ENCODE measurements at regions of chr16 and their contacts with region 1.

Region 1: GRCh38 chr16:85491058-85491771 is 121.9 kb upstream of the GSE1 start:
- DNase-seq: peak; percentile 65
- H3K4me3 ChIP-seq: no peak overlapping the region
- H3K27ac ChIP-seq: peak overlapping the region in 1 of 4 donors; percentile 23
- H3K4me1 ChIP-seq: peaks cover 13 to 22% (median 15%) of the 10 kb centered on the region in 4 donors
- H3K27me3 ChIP-seq: no peaks in the 10 kb centered on the region
- CTCF ChIP-seq: peak; percentile 64 to 85 (median 80)
- EP300 ChIP-seq: no peak
- POLR2A ChIP-seq: no peak

Region 2: DNA sequence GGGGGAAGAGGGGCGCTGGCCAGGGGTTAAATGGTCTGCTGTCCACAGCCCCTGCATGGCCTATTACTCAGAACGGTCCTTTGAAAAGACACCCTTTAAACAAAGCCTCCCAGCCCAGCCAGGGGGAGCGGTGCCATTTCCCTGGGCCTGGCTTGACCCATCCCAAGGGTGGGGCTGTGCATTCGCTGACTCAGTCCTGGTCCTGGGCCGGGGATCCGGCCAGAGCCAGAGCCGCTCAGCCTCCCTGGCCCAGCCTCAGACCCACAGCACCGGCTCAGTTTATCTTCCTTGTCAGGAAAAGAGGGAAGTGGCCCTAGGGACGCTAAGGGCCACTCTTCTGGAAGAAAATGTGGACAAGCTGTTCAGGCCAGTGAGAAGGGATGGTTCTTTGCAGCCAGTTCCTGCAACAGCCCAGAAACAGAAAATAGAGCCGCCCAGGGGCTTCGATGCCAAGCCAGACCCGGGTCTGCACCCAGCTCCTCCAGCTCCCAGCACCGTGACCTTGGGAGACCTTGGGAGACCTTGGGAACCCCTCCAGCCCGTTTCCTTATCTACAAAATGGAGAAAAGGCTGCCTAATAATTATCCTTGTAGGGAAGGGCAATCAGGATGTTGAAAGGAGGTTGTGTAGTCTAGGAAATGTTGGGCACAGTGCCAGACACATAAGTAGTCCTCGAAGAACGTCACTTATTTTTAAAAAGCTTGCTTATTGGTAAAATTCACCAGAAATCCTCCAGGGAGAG is 562.4 kb before region 1 on chr16:
- in situ Hi-C with region 1: no loop called
- intact Hi-C with region 1: no loop called
- DNase-seq: peak; percentile 58
- H3K4me3 ChIP-seq: no peak overlapping the region
- H3K27ac ChIP-seq: peak overlapping the region; percentile 5 to 57 (median 46)
- H3K4me1 ChIP-seq: peaks cover 0 to 28% (median 10%) of the 10 kb centered on the region in 4 donors
- H3K27me3 ChIP-seq: no peaks in the 10 kb centered on the region
- CTCF ChIP-seq: no peak
- EP300 ChIP-seq: no peak
- POLR2A ChIP-seq: no peak

Region 3: DNA sequence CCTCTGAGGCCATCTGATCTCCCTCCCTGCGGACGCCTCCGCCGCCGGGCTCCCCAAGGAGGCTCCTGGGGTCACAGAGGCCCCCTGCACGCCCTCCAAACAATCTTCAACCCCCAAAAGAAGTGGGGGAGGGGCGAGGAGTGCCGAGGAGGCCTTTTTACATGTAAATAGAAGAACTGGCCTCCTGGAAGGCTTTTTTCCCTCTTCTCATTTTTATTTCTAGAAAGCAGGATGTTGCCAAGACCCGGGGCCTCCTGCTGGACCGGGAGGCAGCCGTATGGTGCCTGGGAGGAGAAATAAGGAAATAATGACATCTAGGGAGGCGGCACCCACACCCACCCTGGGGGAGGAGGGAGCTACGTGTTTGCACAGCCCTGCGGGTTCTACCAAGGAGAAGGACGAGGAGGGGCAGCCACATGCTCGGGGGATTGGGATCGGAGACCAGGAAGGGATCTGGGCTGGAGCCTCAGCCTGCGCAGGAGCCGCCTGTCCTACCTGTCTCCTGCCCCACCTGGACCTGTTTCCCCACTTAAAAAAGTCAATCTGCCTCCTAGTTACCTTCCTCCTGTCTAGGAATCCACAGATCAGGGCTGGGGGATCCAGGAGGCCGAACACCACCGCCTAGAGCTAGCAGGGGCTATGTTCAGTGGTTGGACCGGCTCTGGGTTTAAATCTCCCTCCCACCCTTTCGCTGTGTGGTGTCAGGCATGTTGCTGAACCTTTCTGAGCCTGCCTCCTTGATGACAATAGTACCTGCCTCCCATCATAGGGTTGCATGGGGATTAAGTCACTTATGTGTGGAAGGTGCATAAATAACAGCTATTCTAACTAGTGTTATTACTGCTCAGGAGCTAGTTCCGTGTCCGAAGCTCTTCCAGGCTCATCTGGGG is 53.8 kb before region 1 on chr16:
- in situ Hi-C with region 1: loop called in 1 of 4 experiments (anchors 10 kb)
- intact Hi-C with region 1: no loop called
- DNase-seq: peak; percentile 89
- H3K4me3 ChIP-seq: peak overlapping the region in 2 of 4 donors; percentile 15 to 16
- H3K27ac ChIP-seq: peak overlapping the region; percentile 87 to 93 (median 90)
- H3K4me1 ChIP-seq: peaks cover 20 to 33% (median 32%) of the 10 kb centered on the region in 4 donors
- H3K27me3 ChIP-seq: no peaks in the 10 kb centered on the region
- CTCF ChIP-seq: peak in 2 of 5 experiments; percentile 22 to 23
- EP300 ChIP-seq: no peak
- POLR2A ChIP-seq: peak; percentile 52